BJ (cell line): ENCODE measurements at regions of chr11 and their contacts with region 1.

Region 1: GRCh38 chr11:76318744-76319384 is 62.1 kb downstream of the THAP12 start:
- DNase-seq: no peak
- H3K4me3 ChIP-seq: no peak overlapping the region
- H3K27me3 ChIP-seq: peaks cover 17% of the 10 kb centered on the region
- CTCF ChIP-seq: peak; percentile 92

Region 2: DNA sequence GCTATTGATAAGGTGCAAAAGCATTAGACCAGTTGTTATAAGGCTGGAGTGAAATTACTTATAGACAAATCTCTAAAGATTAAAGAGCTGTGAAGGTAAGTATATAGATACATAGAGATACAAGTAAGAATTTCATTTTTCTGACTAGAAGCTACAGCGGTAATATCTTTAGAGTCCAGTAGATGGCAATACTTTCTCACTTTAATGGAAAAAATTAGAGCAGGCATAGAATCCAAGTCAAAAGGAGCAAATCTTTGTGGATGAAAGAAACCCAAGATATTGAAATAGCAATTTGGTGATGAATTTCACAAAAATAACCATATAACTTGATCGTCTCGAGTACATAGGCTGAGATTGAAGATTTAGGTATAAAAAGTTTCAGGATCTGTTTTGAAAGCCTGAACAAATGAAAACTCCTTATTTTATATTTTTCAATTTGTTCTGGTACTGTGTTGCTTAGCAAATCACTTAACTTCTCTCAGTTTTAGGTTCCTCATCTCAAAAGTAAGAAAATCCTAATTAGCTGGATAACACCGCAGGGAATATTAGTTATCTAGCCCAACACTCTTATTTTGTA is 421.9 kb before region 1 on chr11:
- CTCF ChIA-PET with region 1: interaction called, 111 read pairs
- POLR2A ChIA-PET with region 1: no interaction called
- DNase-seq: no peak
- H3K4me3 ChIP-seq: no peak overlapping the region
- H3K27me3 ChIP-seq: no peaks in the 10 kb centered on the region
- CTCF ChIP-seq: peak; percentile 53

Region 3: DNA sequence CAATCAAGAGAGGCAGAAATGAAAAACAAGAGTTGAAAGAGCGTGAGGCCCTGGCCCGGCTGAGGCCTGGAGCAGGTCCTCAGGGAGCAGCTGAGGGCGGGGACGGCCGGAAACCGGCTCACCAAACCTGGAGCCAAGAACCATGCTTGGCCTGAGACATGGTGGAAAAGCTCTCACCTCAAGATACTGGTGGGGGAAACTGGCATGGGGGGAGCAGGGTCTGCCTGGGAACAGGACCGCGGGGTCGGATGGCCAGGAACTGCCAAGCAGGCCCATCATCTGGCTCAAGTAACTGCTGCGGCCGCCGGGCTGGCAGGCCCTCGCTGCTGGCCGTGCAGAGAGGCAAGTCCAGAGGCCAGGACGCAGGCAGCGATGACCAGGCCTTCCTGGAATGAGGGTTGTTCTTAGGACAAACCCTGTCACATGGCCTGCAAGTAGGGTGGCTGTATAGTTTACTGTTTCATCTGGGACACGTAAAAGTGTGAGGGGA is 93.7 kb before region 1 on chr11:
- CTCF ChIA-PET with region 1: no interaction called
- POLR2A ChIA-PET with region 1: no interaction called
- DNase-seq: no peak
- H3K4me3 ChIP-seq: no peak overlapping the region
- H3K27me3 ChIP-seq: no peaks in the 10 kb centered on the region; the same call in 1 of the 2 replicates
- CTCF ChIP-seq: no peak

Region 4: DNA sequence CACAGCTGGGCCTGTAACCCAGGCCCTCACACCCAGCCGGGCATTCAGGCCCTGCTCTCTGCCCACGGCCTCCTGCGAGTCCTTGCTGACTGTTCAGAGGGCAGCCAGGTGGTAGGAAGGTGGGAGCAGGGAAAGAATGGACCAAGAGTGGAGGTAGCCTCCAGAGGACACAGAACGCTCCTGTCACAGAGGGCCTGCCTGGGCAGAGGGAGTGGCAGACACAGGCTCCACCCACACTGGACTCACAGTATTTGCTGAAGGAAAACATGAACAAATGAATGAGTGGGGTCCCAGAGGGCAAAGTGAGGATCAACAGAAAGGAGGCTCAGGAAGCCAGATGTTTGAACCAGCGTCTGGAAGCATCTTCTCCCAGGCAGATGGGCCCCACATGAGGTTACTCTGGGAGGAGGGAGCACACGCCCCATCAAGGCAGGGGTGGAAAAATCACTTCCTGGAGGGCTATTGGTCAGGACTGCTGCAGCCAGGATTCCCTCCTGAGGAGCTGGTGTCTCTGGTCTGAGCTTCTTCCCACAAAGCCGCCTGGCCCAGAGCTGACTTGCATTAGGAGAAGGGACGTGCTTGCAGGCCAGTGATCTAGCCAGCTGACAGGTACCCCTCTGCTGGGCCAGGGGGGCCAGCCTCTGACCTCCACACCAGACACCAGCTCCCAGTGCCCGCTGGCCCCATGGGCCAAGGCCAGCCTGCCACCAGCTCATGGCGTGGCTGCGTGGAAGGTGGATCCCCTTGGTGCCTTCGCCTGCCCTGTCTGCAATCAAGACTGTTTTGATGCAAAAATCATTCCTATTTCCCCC is 21.9 kb before region 1 on chr11:
- CTCF ChIA-PET with region 1: no interaction called
- POLR2A ChIA-PET with region 1: no interaction called
- DNase-seq: no peak
- H3K4me3 ChIP-seq: no peak overlapping the region
- H3K27me3 ChIP-seq: peaks cover 4% of the 10 kb centered on the region
- CTCF ChIP-seq: no peak

Region 5: GRCh38 chr11:76329084-76329984 is 10.5 kb after region 1 on chr11:
- CTCF ChIA-PET with region 1: interaction called, 28 read pairs
- POLR2A ChIA-PET with region 1: no interaction called
- DNase-seq: no peak
- H3K4me3 ChIP-seq: no peak overlapping the region
- H3K27me3 ChIP-seq: no peaks in the 10 kb centered on the region; the same call in 1 of the 2 replicates
- CTCF ChIP-seq: no peak

Region 6: GRCh38 chr11:76782526-76783293 is 463.8 kb after region 1 on chr11:
- CTCF ChIA-PET with region 1: no interaction called
- POLR2A ChIA-PET with region 1: no interaction called
- DNase-seq: peak; percentile 70
- H3K4me3 ChIP-seq: peak overlapping the region; percentile 97
- H3K27me3 ChIP-seq: peaks cover 6% of the 10 kb centered on the region
- CTCF ChIP-seq: no peak